HepG2 (cell line): ENCODE measurements at regions of chr18 and their contacts with region 1.

Region 1: DNA sequence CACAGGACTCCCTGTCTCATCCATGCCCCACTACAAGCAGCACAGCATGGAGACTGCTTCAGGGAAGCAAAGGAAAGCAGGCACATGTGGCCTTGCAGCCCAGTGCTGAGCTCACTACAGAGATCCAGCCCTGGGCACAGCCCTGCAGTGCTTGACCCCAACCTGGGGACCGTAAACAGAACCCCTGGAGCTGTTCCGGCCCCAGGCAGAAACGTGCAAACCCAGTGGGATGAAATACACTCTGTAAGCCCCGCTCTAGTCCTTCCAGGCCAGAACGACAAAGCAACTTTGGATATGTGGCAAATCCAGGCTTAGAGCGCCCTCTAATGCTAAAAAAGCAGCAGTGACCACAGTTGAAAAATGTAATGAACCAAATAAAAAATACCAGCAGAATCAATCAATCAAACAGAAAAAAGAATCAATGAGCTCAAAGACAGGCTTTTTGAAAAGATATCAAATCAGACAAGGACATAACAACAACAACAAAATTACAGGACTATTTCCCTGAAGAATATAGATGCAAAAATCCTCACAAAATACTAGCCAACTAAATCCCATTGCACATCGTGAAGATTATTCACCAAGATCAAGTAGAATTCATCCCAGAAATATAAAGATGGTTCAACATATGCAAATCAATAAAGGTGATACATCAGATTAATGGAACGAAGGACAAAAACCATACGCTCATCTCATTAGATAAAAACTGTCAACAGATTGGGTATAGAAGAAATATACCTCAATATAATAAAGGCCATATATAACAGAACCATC is 45.6 kb downstream of the ZNF519 start:
- DNase-seq: peak; percentile 50
- ATAC-seq: peak; percentile 94
- H3K4me3 ChIP-seq: no peak overlapping the region; a peak in 1 of 6 replicates
- H3K27ac ChIP-seq: no peak overlapping the region
- H3K4me1 ChIP-seq: no peaks in the 10 kb centered on the region
- H3K27me3 ChIP-seq: no peaks in the 10 kb centered on the region
- CTCF ChIP-seq: peak; percentile 82
- EP300 ChIP-seq: no peak
- POLR2A ChIP-seq: no peak
- RAD21 ChIP-seq: peak; percentile 72

Region 2: DNA sequence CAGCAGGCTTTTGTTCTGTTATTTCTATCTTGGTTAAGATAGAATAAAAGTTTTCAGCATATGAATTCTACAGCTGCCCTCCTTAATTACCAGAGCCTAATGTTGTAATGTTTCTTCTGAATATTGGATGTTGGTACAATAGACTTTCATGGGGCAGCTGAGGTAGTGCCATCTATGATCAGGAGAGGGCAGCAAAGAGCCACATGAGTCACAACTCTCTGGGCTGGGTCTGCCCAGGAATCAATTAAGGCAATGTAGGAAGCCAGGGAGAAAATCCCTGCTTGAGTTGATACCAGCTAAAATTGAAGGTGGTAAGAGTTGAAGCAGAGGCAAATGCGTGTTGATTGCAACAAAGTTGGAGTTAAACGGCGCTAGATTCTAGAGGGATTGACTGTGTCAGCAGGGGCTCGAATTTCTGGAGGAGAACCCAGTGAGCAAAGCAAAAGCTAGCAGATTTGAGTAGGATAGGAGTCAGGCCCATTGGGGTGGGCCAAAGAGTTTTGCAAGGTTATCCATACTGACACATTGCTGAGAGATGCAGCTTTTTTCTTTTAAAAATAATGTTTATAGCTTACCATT is 273.3 kb before region 1 on chr18:
- CTCF ChIA-PET with region 1: interaction called, 23 read pairs
- POLR2A ChIA-PET with region 1: no interaction called
- in situ Hi-C with region 1: loop called (anchors 5 kb)
- intact Hi-C with region 1: loop called (anchors 1 kb)
- DNase-seq: peak; percentile 54
- ATAC-seq: peak; percentile 92
- H3K4me3 ChIP-seq: no peak overlapping the region
- H3K27ac ChIP-seq: no peak overlapping the region
- H3K4me1 ChIP-seq: no peaks in the 10 kb centered on the region; the same call in 1 of the 2 replicates
- H3K27me3 ChIP-seq: peaks cover 0 to 14% of the 10 kb centered on the region in 2 experiments; a peak in 1 of 5 replicates
- CTCF ChIP-seq: peak; percentile 80
- EP300 ChIP-seq: no peak
- POLR2A ChIP-seq: no peak
- RAD21 ChIP-seq: no peak

Region 3: DNA sequence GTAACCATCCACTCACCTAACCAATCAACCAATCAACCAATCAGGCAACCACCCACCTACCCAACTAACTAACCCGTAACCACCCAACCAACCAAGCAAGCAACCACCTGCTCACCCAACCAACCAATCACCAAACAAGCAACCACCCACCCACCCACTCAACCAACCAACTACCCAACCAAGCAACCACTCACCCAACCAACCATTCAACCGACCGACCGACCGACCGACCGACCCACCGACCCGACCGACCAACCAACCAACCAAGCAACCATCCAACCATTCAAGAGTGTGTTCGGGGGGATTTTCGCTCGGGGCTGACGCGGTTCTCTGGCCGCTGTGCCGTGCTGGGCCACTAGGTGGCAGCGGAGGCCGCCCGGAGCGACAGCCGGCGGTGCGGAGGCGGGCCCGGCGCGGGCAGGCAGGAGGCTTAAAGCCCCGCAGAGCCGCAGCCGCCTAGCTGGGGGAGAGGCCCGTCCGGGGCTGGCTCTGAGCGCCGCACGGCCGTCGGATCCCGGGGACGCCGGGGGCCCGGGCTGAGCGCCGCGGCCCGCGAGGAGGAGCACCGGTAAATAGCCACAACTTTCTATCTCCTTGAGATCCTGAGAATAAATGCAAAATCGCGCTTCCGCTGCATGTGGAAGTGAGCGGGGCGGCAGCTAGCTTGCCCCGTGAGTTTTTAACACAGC is 262.8 kb before region 1 on chr18 and contains the start of gene MC5R:
- CTCF ChIA-PET with region 1: interaction called, 23 read pairs
- POLR2A ChIA-PET with region 1: no interaction called
- in situ Hi-C with region 1: no loop called
- intact Hi-C with region 1: loop called (anchors 1 kb)
- DNase-seq: peak; percentile 23
- ATAC-seq: peak; percentile 97
- H3K4me3 ChIP-seq: peak within 1 kb of the TSS in 2 of 3 experiments; percentile 38 to 45; a peak in 4 of 6 replicates
- H3K27ac ChIP-seq: no peak within 1 kb of the TSS
- H3K4me1 ChIP-seq: peaks cover 14% of the 10 kb centered on the region
- H3K27me3 ChIP-seq: peaks cover 8 to 43% of the 10 kb centered on the region in 2 experiments; a peak in 3 of 5 replicates
- CTCF ChIP-seq: peak; percentile 93
- EP300 ChIP-seq: no peak
- POLR2A ChIP-seq: no peak
- RAD21 ChIP-seq: peak; percentile 95
- total RNA-seq, gene MC5R: not detected in 2 replicates

Region 4: GRCh38 chr18:13831864-13832508 is 254.7 kb before region 1 on chr18:
- CTCF ChIA-PET with region 1: interaction called, 21 read pairs
- POLR2A ChIA-PET with region 1: no interaction called
- in situ Hi-C with region 1: no loop called
- intact Hi-C with region 1: loop called (anchors 1 kb)
- DNase-seq: peak; percentile 36
- ATAC-seq: peak; percentile 79
- H3K4me3 ChIP-seq: no peak overlapping the region
- H3K27ac ChIP-seq: no peak overlapping the region
- H3K4me1 ChIP-seq: peaks cover 10% of the 10 kb centered on the region
- H3K27me3 ChIP-seq: peaks cover 0 to 8% of the 10 kb centered on the region in 2 experiments; a peak in 2 of 5 replicates
- CTCF ChIP-seq: peak; percentile 46
- EP300 ChIP-seq: no peak
- POLR2A ChIP-seq: no peak
- RAD21 ChIP-seq: 0 out of 2 replicates have a peak, but pooled peaks have one; percentile 25